Activated CD4-positive, alpha-beta memory T cell treated with anti-CD3 and anti-CD28 coated beads for 36 hours (primary cell): ENCODE measurements at regions of chr19 and their contacts with region 1.

Region 1: DNA sequence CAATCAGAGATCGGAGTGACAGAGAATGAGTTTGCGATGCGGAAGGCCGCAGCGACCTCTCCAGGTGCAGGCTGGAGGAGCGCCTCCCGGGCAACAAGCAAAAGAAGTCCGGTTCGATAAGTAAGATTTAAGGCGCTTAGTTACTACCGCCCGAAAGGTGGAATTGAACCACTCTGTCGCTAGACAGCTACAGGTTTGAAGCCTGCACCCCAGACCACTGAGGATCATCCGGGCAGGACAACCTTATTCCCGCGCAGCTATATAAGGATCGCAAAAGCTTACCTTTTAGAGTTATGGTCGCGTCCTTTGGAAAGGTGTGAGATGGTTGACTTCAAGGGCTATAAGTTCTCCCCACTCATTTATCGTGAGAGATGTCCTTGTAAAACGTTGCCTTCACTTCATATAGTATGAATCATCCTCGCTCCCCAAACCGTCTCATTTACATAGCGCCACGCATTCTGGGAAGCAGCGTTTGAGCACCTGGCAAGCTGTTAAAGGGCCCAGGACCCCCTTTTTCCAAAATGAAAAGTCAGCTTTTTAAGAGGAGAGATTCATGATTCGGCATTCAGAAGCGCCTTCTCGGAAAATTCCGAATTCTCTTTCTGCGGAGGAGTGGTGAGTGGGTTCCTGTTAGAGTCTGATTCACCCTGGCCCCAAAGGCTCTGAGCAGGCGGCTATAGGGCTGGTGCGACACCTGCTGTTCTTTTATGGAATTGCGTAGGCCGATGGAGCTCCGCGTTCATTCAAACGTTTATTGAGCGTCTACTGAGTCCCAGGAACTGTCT is 10.8 kb downstream of the FOSB start:
- DNase-seq: peak; percentile 96
- H3K4me3 Mint-ChIP-seq: peak overlapping the region; percentile 61
- H3K27ac Mint-ChIP-seq: peak overlapping the region; percentile 95
- H3K4me1 Mint-ChIP-seq: peaks cover 27% of the 10 kb centered on the region
- H3K27me3 Mint-ChIP-seq: no peaks in the 10 kb centered on the region

Region 2: DNA sequence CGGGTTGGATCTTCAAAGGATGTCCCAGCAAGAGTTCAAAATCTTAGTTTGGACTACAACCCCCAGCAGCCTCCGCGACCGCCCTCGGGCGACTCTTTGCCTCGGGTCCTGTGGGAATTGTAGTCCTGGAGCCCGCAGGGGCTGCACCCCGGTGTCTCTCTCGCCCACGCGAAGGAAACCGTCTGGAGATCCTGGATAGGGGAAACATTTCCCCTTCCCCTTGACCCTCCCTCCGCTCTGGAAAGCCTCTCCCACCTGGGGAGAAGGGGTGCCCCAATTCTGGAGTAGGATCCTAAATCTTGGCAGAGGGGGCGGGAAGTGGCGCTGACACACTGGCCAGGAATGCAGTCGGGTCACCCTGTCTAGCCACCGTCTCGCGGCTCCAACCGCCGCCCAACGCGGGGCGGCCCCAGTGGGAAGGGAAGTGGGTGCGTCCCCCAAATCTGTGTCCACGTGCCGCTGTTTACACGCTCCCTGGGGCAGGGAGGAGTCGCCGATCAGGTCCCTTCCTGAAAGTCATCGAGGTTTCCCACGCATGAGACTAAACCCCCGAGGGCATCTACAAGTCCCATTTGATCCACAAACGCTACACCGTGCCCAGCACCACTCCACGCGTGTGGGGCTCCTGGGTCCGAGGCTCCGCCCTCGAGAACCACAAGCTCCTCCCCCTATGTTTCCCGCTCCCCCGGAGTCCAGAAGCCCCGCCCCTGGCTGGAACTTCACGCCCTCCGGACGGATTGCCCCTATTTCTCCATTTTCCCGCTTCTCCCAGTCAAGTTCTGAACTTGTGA is 73.0 kb before region 1 on chr19:
- CTCF ChIA-PET with region 1: interaction called, 36 read pairs
- POLR2A ChIA-PET with region 1: interaction called, 3 read pairs
- intact Hi-C with region 1: loop called (anchors 1 kb)
- DNase-seq: peak; percentile 89
- H3K4me3 Mint-ChIP-seq: peak overlapping the region; percentile 94
- H3K27ac Mint-ChIP-seq: peak overlapping the region; percentile 84
- H3K4me1 Mint-ChIP-seq: peaks cover 39% of the 10 kb centered on the region
- H3K27me3 Mint-ChIP-seq: peaks cover 26% of the 10 kb centered on the region

Region 3: GRCh38 chr19:45423589-45424190 is 55.0 kb before region 1 on chr19 and contains the start of gene ERCC1:
- CTCF ChIA-PET with region 1: interaction called, 63 read pairs
- POLR2A ChIA-PET with region 1: no interaction called
- intact Hi-C with region 1: loop called (anchors 1 kb)
- DNase-seq: peak; percentile 92
- H3K4me3 Mint-ChIP-seq: peak within 1 kb of the TSS; percentile 85
- H3K27ac Mint-ChIP-seq: peak within 1 kb of the TSS; percentile 88
- H3K4me1 Mint-ChIP-seq: peaks cover 54% of the 10 kb centered on the region
- H3K27me3 Mint-ChIP-seq: peaks cover 2% of the 10 kb centered on the region
- total RNA-seq, gene ERCC1: 59.4 to 59.7 TPM

Region 4: GRCh38 chr19:45446320-45446763 is 32.3 kb before region 1 on chr19:
- CTCF ChIA-PET with region 1: interaction called, 420 read pairs
- POLR2A ChIA-PET with region 1: interaction called, 5 read pairs
- intact Hi-C with region 1: loop called (anchors 1 kb)
- DNase-seq: no peak
- H3K4me3 Mint-ChIP-seq: no peak overlapping the region
- H3K27ac Mint-ChIP-seq: no peak overlapping the region
- H3K4me1 Mint-ChIP-seq: peaks cover 54% of the 10 kb centered on the region
- H3K27me3 Mint-ChIP-seq: no peaks in the 10 kb centered on the region

Region 5: DNA sequence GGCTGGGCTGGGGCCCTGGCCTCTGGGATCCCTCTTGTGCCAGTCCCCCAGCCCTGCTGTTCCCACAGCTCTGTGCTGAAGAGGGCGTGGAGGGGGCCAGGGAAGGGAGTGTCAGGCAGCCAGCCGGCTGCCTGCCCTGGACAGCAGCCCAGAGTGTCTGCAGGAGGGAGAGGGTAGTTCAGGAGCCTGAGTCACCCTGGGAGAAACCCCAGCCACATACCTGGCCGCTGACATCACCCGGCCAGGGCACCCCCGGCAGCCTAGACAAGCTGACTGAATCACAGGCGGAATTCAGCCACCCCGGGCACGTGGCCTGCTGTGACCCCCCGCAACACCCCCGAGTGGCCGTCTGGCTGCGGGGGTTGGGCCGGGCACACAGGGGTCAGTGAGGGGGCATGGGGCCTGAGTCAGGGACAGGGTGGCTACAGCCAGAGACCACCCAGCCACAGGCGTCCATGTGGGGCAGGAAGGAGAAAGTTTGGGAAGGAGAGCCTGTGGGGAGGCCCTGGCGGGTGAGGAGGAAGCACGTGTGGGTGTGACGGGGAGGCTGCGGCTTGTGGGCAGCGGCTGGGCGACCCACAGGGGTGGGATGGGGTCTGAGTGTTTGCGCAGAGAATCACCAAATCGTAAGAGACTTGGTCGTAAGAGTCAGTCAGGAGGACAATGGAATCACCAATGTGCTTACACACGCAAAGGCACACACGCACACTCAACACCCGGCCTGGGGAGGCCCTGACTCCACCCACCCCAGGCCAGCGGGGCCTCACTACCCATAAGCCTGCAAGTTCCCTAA is 22.7 kb before region 1 on chr19:
- CTCF ChIA-PET with region 1: interaction called, 18 read pairs
- POLR2A ChIA-PET with region 1: interaction called, 3 read pairs
- intact Hi-C with region 1: no loop called
- DNase-seq: peak; percentile 84
- H3K4me3 Mint-ChIP-seq: no peak overlapping the region
- H3K27ac Mint-ChIP-seq: peak overlapping the region; percentile 56
- H3K4me1 Mint-ChIP-seq: peaks cover 29% of the 10 kb centered on the region
- H3K27me3 Mint-ChIP-seq: no peaks in the 10 kb centered on the region

Region 6: DNA sequence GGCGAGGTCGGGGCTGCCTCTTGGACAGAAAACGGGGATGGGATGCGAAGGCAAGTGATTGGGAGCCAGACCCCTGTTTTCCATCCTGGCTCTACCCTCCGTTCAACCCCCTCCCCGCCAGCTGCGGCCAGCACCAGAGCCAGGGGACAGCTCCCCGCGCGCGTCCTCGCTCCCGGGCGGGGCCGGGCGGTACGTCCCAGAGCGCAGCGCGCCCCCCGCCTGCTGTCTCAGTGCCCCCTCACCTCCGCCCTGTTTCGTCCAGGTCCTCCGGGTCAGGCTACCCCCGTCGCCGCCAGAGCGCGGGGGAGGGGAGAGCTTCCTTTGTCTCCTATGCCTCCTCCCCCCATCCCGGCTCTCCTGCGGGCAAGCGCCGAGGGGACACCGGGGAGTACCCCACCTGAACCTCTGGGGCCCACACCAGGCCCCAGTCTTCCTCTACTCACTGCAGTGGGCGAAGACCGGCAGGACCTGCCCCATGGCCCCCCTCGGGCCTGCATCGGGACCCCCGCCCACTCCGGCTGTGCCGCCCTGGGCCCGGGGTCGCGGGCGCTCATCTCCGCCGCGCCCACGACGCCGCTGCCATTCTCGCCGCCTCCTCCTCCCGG is 17.8 kb after region 1 on chr19:
- CTCF ChIA-PET with region 1: interaction called, 20 read pairs
- POLR2A ChIA-PET with region 1: interaction called, 3 read pairs
- intact Hi-C with region 1: no loop called
- DNase-seq: peak; percentile 60
- H3K4me3 Mint-ChIP-seq: peak overlapping the region; percentile 50
- H3K27ac Mint-ChIP-seq: no peak overlapping the region
- H3K4me1 Mint-ChIP-seq: peaks cover 33% of the 10 kb centered on the region
- H3K27me3 Mint-ChIP-seq: peaks cover 25% of the 10 kb centered on the region

Region 7: GRCh38 chr19:45506246-45506990 is 27.8 kb after region 1 on chr19:
- CTCF ChIA-PET with region 1: interaction called, 4 read pairs
- POLR2A ChIA-PET with region 1: no interaction called
- intact Hi-C with region 1: loop called (anchors 2 kb)
- DNase-seq: peak; percentile 99
- H3K4me3 Mint-ChIP-seq: peak overlapping the region; percentile 86
- H3K27ac Mint-ChIP-seq: peak overlapping the region; percentile 94
- H3K4me1 Mint-ChIP-seq: peaks cover 35% of the 10 kb centered on the region
- H3K27me3 Mint-ChIP-seq: no peaks in the 10 kb centered on the region